Mammary epithelial cell (primary cell): ENCODE measurements at regions of chr2 and their contacts with region 1.

Region 1: GRCh38 chr2:169109502-169110409 is 40.4 kb downstream of the DHRS9 start:
- DNase-seq: peak; percentile 55
- H3K4me3 ChIP-seq: no peak overlapping the region
- H3K27ac ChIP-seq: no peak overlapping the region
- H3K4me1 ChIP-seq: no peaks in the 10 kb centered on the region
- H3K27me3 ChIP-seq: no peaks in the 10 kb centered on the region
- CTCF ChIP-seq: peak; percentile 81 to 89

Region 2: DNA sequence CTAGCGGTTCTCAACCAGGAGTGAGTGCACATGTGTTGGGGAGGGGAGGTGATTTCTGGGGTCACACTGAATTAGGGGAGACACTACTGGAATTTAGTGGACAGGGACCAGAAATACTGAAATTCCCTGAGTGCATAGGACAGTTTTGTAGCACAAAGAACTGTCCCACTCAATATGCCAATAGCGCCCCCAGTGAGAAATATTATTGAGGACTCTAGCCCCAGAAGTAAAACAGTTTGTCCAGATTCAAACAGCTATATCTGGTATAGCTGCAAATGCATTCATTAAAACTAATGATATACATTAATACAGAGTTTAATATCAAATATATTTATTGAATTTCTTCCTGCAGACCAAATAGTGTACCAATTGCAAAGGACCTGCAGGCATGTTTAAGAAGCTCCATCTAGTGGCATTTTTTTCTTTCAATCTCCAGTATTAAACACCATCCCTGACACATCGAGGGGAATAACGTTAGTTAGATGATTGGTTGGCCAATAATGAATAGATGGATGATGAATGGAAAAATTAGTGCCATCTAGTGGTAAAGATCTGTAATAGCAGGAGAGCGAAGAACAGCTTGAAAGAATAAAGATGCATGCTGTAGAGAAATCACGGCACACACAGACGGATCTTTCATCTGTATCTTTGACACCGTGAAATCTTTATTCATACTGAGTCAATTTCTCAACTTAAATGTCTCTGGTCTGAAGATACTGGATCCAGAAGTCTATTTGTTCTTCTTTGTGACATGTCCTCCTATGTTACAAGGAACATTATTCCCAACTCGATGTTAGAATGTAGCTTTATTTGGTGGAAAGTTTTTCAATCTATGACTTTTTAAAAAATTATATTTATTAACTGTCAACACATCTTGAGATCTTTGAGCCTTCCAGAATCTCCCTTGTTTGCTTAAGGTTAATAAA is 22.1 kb after region 1 on chr2:
- CTCF ChIA-PET with region 1: interaction called, 5 read pairs
- dilution Hi-C with region 1: no loop called
- in situ Hi-C with region 1: no loop called
- intact Hi-C with region 1: loop called (anchors 1 kb)
- DNase-seq: peak; percentile 80
- H3K4me3 ChIP-seq: no peak overlapping the region
- H3K27ac ChIP-seq: no peak overlapping the region
- H3K4me1 ChIP-seq: no peaks in the 10 kb centered on the region
- H3K27me3 ChIP-seq: no peaks in the 10 kb centered on the region
- CTCF ChIP-seq: peak; percentile 72 to 78

Region 3: DNA sequence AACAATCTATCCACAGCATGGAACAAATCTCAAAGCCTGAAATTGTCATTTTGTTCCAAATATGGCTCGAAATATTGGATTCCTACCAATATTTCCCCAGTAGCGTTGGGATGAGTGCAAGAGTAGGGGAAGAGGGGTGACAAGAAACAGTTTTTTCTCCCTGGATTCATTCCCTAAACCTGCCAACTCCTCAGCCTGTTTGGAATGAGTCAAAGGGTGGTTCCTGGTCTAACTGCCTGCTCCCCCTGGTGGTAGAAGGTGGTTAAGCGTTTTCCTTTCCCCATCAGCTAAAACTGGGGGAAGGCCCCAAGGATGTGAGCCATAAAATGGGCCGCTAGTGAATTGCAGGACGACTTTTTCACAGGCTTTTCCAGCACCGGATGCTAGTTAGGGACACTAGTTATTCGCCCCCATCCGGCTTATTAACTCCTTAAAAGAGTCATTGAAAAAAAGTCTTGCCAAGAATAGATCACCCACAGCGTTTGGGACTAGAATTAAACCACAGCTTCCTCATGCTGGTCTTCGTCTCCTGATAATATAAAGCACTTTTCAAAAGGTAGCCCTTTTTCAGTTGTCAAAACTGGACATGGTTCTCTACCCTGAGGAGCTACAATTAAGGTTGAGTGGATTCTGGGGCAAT is 32.1 kb after region 1 on chr2:
- CTCF ChIA-PET with region 1: no interaction called
- dilution Hi-C with region 1: no loop called
- in situ Hi-C with region 1: no loop called
- intact Hi-C with region 1: loop called (anchors 1 kb)
- DNase-seq: peak; percentile 44
- H3K4me3 ChIP-seq: no peak overlapping the region
- H3K27ac ChIP-seq: no peak overlapping the region
- H3K4me1 ChIP-seq: no peaks in the 10 kb centered on the region
- H3K27me3 ChIP-seq: no peaks in the 10 kb centered on the region
- CTCF ChIP-seq: peak; percentile 89 to 91

Region 4: DNA sequence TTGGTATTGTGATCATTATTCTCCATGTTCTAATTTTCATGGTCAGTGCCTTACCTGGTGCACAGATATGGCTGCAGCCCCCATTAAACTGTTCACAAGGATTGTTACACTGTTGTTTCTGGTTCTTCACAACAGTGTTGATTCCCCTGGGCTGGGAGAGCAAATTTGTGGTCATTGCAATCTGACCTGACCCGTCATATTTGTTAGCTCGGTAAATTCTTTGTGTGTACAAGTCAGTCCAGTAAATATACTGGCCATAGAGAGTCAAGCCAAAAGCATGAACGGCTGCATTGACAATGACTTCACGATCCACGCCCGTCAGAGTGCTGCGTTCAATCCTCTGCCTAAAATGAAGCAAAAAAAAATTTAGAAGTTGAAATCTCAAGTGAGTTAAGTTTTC is 94.2 kb after region 1 on chr2:
- CTCF ChIA-PET with region 1: no interaction called
- dilution Hi-C with region 1: loop called (anchors 5 kb)
- in situ Hi-C with region 1: no loop called
- intact Hi-C with region 1: no loop called
- DNase-seq: no peak
- H3K4me3 ChIP-seq: no peak overlapping the region
- H3K27ac ChIP-seq: no peak overlapping the region
- H3K4me1 ChIP-seq: no peaks in the 10 kb centered on the region
- H3K27me3 ChIP-seq: peaks cover 2% of the 10 kb centered on the region
- CTCF ChIP-seq: no peak

Region 5: DNA sequence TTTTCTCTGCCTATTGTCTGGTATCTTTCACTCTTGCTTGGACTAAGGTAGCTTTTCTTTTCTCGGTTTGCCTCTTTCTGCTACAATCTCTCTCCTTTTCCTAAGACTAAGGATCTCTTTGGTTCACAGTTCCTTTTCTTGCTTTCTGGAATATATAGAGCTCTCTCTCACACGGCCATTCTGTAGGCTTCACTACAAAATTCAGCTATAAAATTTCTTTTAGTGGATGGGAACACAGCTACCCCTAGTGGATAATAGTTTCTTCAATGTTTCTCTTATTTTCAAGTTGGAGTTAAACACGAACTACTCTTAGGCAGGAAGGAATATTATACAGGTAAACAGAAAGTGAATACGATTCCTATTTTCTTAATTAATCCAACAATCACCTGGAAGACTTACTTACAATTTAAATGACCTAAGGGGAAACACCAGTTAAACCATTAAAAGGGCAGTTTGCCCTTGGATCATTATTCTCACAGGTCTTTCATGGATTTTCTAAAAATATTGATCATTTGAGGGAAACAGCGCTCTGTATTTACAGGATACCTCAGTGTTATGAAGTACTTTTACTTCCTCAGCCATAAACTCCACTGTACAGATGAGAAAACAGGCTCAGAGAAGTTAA is 112.1 kb after region 1 on chr2:
- CTCF ChIA-PET with region 1: no interaction called
- dilution Hi-C with region 1: no loop called
- in situ Hi-C with region 1: no loop called
- intact Hi-C with region 1: loop called (anchors 2 kb)
- DNase-seq: peak; percentile 3
- H3K4me3 ChIP-seq: no peak overlapping the region
- H3K27ac ChIP-seq: no peak overlapping the region
- H3K4me1 ChIP-seq: no peaks in the 10 kb centered on the region
- H3K27me3 ChIP-seq: no peaks in the 10 kb centered on the region
- CTCF ChIP-seq: peak; percentile 46 to 51

Region 6: DNA sequence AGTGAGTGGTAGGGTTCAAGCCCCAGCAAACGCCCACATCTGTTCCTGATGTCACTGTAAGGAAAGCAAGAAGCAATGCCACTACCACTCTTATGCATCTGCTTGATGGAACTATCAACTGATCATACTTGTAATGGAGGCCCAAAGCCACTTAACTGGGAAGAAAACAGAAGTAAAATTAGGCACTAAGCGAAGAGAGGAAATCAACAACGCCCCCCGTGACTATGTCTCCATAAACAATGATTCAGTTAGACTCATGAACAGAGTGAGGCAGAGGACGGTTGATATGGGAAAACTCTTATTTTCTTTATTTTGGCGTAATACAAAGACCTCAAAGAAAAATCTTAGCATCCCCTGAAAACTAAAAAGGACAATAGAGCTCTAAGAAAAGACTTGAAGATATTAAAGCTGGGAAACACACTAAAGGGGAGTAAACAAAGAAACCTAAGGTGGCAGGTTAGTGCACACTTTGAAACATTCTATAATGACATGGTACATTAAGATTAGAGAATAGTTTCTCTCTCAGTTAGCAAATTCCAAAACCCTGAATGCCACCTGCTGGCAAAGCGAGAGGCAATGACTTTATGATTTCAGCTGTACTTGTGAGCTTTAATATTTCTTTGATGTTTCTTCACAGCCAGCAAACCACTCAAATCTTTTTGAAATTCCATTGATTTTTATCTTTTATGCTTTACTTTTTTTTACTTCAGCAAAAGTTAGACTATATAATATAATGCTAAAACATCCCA is 166.1 kb after region 1 on chr2:
- CTCF ChIA-PET with region 1: no interaction called
- dilution Hi-C with region 1: no loop called
- in situ Hi-C with region 1: no loop called
- intact Hi-C with region 1: loop called (anchors 5 kb)
- DNase-seq: peak; percentile 7
- H3K4me3 ChIP-seq: no peak overlapping the region
- H3K27ac ChIP-seq: no peak overlapping the region
- H3K4me1 ChIP-seq: no peaks in the 10 kb centered on the region
- H3K27me3 ChIP-seq: no peaks in the 10 kb centered on the region
- CTCF ChIP-seq: peak in 1 of 2 donors; percentile 47

Region 7: DNA sequence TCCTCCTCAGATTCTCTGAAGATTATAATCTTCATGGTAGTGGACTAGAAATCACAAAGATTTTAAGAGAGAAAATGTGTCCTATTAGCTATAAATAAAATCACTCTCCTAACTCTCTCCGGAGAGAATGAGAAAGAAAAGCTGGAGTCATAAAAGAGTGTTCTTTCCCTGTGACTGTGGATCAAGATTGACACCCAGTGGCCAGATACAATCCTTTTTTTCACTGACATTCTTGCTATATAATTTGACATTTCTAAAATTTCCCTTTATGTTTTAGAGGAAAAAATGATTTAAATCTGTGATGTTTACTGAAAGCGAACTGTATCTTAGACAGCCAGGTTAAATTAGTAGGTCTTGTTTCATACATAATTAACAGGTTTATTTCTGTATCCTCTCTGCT is 287.9 kb after region 1 on chr2:
- CTCF ChIA-PET with region 1: no interaction called
- dilution Hi-C with region 1: no loop called
- in situ Hi-C with region 1: loop called in 1 of 2 experiments (anchors 25 kb)
- intact Hi-C with region 1: loop called (anchors 1 kb)
- DNase-seq: no peak
- H3K4me3 ChIP-seq: no peak overlapping the region
- H3K27ac ChIP-seq: no peak overlapping the region
- H3K4me1 ChIP-seq: peaks cover 7% of the 10 kb centered on the region
- H3K27me3 ChIP-seq: no peaks in the 10 kb centered on the region
- CTCF ChIP-seq: peak; percentile 29 to 50